Pancreas (tissue), 10 donors: ENCODE measurements at regions of chr12 and their contacts with region 1.

Region 1: DNA sequence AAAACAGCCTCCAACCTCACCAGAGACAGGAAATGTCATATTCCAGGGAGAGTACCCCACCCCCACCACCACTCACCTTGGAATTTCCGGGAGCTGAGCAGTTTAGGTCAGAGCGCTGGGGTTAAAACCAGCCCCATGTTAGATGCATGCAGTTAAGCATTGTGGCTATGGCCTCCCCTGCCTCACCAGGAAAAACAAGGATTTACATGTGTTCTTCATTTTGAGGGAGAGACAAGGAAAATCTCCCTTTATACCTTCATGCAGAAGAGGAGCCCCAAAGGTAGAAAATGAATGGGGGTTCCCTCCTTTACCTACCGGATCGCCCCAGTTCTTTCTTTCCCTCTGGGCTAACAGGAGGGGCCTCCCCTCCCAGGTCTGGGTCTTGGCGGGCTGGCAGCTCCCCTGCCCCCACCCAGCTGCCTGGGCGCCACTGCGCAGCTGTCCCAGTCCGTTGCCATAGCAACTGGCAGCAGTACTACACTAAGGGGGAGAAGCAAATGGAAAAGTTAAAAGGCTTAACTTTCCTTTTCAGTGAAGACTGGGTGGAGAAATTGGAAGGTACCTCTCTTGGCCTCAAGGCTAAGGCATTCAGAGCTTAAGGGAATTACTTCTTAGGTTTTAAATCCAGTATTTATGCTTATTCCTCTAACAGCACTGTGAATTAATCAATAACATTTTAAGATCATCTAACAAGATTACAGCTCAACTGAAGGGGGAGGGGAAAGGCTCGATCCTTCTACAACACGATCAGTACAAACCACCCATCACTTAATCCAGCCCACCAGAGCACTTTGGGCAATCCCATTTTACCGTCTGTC is 20.5 kb downstream of the CBX5 start:
- DNase-seq: peak; percentile 75 to 89 (median 83)
- ATAC-seq: peak; percentile 97 to 98 (median 98)
- H3K4me3 ChIP-seq: peak overlapping the region; percentile 15 to 57 (median 32)
- H3K27ac ChIP-seq: peak overlapping the region; percentile 43 to 90 (median 80)
- H3K4me1 ChIP-seq: peaks cover 0 to 17% (median 11%) of the 10 kb centered on the region in 3 donors
- H3K27me3 ChIP-seq: no peaks in the 10 kb centered on the region
- CTCF ChIP-seq: no peak

Region 2: DNA sequence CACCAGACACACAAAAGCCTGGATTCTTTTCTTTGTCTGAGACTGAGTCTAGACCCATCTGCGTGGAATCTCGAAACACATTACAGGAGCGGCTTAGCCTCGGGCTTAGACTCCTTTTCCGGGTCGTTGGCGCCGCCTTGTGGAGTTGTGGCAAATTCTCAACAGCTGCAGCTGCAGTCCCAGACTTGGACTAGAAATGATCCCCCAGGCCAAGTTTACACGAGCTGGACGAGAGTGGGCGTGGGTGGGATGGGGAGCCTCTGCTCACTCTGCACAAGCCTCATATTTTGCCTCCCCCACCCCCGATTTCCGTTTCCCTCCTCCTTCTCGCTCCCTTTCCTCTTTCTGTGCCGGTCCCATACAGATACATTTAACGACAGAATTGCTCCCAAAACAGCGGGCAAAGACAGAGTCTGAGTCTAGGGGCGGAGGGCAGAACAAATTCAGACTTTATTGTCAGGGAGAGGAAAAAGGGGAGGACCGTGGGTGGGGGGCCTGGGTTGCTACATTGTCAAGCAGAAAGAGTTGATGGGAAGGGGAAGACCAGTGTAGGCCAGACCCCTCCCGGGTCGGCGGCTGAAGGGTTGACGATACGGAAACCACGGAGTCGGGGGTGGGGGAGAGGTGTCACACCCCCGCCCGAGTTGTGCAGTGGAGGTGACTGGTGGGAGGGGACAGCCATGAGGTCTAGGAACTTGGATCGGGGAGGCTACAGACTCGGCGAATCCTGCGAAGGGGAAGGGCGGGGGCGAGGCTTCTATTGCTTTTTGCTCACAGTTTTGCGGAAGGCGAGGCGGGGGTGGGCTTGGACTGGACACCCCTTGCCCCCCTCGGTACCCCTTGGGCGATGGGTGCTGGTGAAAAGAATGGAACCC is 109.5 kb after region 1 on chr12:
- intact Hi-C with region 1: loop called in 1 of 3 experiments (anchors 10 kb)
- DNase-seq: peak; percentile 82 to 96 (median 92)
- ATAC-seq: peak; percentile 77 to 85 (median 84)
- H3K4me3 ChIP-seq: peak overlapping the region in 1 of 4 donors; percentile 21
- H3K27ac ChIP-seq: no peak overlapping the region
- H3K4me1 ChIP-seq: peaks cover 0 to 3% (median 0%) of the 10 kb centered on the region in 3 donors
- H3K27me3 ChIP-seq: no peaks in the 10 kb centered on the region
- CTCF ChIP-seq: peak; percentile 44 to 59 (median 55)